HAP-1 (cell line): ENCODE measurements at regions of chr3 and their contacts with region 1.

Region 1: GRCh38 chr3:134373994-134374790 is at the start of gene AMOTL2:
- DNase-seq: peak; percentile 95 to 96
- H3K4me3 ChIP-seq: peak within 1 kb of the TSS; percentile 99
- H3K4me1 ChIP-seq: peaks cover 18% of the 10 kb centered on the region
- H3K27me3 ChIP-seq: no peaks in the 10 kb centered on the region

Region 2: DNA sequence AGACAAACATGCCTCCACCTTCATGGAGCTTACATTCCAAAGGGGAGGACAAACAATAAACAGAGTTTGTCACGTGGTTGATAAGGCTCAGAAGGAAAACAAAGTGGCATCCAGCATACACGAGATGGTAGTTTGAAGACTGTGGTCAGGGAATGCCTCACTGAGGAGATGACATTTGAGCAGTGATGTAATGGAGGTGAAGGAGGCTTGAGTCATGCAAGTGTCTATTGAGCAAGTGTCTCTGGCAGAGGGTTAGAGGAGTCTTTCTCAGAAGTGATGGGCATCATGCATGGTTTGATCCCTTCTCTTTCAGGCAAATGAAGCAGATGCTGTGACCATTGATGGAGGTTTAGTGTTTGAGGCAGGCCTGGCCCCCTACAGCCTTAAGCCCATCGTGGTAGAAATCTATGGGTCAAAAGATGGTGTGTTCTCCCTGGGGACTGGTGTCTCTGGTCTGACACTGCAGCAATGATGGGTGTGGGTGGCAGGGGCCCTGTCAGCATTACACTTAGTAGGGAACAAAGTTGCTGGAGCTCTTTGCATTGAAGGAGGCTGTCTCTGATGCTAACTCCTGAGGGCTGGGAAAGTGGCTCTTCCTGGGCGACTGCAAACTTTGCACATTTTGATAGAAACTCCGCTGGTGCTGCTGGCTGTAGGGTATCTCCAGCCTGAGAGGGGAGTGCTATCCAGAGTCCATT is 682.6 kb before region 1 on chr3:
- in situ Hi-C with region 1: no loop called
- DNase-seq: no peak
- H3K4me3 ChIP-seq: no peak overlapping the region
- H3K4me1 ChIP-seq: no peaks in the 10 kb centered on the region
- H3K27me3 ChIP-seq: no peaks in the 10 kb centered on the region

Region 3: DNA sequence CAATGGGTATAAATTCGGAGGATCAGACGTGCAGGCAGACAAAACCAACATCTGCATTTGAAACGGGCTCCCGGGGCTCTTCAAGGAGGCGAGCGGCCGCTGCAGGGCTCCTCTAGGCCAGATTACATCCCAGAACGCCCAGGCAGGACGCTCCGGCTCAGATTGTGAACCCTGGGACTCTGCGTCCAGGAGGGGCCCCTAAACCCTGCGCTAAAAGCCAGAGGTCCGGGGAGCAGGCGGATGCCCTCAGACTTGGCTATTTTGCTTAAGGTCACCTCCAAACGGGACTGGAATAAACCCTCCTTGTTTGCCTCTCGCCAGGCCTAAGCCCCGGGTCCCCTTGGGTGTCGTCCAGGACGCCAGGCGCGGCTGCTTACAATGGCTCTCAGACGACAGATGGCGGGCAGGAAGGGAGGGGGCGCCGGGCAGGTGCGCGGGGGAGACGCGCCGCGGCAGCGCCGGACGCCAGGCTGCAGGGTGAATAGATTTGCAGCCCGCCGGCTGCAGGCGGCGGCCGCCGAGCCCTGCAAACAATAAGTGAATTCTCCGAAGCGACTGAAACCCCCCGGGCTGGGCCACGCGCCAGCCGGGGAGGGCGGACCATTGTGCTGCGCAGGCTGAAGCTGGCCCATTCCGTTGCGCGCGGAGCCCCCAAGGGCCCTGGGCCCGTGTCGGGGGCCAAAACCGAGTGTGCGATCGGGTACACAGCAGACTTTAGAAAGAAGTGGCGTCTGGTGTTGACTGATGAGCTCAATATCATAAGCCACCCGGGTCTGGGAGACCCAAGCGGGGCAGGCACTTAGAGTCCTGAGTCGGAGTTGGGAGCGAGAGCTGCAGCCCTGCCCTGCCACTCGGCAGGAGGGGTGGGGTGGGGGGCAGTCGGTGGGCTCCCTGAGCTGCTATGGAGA is 32.4 kb after region 1 on chr3:
- in situ Hi-C with region 1: loop called (anchors 5 kb)
- DNase-seq: peak; percentile 62 to 82
- H3K4me3 ChIP-seq: peak overlapping the region; percentile 15
- H3K4me1 ChIP-seq: peaks cover 35% of the 10 kb centered on the region
- H3K27me3 ChIP-seq: no peaks in the 10 kb centered on the region